ENCODE measurements at regions of chr4 and their contacts with region 1.

Region 1: GRCh38 chr4:121668368-121669162 is 28.2 kb downstream of the ANXA5 start:
- DNase-seq: no peak
- ATAC-seq: peak in 1 of 4 donors; percentile 76
- H3K4me3 ChIP-seq: no peak overlapping the region
- H3K27ac ChIP-seq: peak overlapping the region in 2 of 12 donors; percentile 5 to 12
- H3K4me1 ChIP-seq: peaks cover 0 to 9% (median 0%) of the 10 kb centered on the region in 12 donors
- H3K27me3 ChIP-seq: no peaks in the 10 kb centered on the region
- CTCF ChIP-seq: no peak
- POLR2A ChIP-seq: no peak

Region 2: DNA sequence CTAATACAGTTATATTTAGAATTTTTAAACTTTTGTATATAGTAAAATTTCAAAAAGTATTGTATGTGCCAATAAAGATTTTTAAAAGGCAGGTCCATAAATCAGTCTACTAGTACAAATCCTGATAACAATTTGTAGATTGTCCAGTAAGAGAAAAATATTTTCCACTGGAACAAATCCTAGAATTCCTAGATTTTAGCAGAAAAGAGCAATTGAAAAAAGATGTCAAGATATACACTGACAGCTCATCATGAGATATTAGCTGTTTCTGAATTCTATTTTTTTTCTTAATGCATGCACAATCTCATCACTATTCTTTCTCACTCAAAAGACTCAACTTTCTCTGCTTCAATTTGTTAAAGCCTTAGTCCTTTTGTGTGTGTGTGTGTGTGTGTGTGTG is 1312.7 kb before region 1 on chr4:
- intact Hi-C with region 1: loop called in 1 of 10 experiments (anchors 10 kb)
- DNase-seq: no peak
- ATAC-seq: no peak
- H3K4me3 ChIP-seq: no peak overlapping the region
- H3K27ac ChIP-seq: no peak overlapping the region
- H3K4me1 ChIP-seq: no peaks in the 10 kb centered on the region
- H3K27me3 ChIP-seq: no peaks in the 10 kb centered on the region
- CTCF ChIP-seq: no peak
- POLR2A ChIP-seq: no peak

Measured in heart left ventricle (tissue), 16 donors.